SK-N-SH (cell line): ENCODE measurements at regions of chr1 and their contacts with region 1.

Region 1: DNA sequence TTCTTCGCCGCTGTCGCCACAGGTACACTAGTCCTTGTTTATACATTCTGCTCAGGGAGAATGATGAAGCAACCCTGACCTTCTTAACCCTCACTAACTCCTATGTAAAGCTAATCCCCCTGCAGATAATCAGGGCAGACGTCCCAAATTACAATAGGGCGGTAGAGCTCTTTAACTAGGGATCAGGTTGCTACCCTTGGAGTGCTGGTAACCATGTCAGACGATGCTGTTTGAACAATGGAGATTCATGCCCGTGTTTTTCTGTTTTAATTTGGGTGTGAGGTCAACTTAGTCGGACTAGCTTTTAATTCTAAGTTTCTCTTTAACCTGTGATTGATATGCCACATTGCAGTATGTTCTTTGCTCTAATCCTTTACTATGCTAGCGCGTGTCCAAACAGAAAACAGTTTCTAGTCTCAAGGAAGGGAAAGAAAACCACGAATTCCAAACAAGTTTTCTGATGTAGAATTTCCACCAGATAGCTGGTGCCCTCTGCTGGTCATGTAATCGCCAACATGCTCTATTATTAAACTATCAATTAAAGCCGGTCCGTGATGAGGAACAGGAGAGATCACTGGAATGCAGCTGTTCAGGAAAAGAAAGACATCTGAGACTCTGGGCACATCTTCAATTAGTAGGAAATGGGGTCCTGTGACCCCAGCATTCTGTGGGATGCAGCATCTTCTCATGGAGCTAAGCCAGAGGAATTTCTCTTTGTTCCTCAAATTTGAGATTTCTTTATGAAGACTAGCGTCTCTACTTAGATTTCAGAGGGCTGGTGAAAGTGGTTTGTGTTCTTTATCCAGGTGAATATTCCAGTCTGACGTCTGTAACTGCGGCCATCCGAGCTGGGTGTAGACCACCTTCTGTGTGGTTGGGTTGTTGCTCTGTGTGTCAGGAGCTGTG is 18.3 kb upstream of the VAMP3 start:
- DNase-seq: peak; percentile 62
- H3K4me3 ChIP-seq: no peak overlapping the region; a peak in 3 of 4 replicates
- H3K27ac ChIP-seq: peak overlapping the region in 1 of 2 experiments; percentile 77; a peak in 2 of 4 replicates
- H3K4me1 ChIP-seq: peaks cover 0 to 17% of the 10 kb centered on the region in 2 experiments; a peak in 2 of 4 replicates
- H3K27me3 ChIP-seq: no peaks in the 10 kb centered on the region
- CTCF ChIP-seq: peak; percentile 75
- EP300 ChIP-seq: no peak
- RAD21 ChIP-seq: peak; percentile 91

Region 2: GRCh38 chr1:7447077-7447476 is 305.7 kb before region 1 on chr1:
- CTCF ChIA-PET with region 1: no interaction called
- POLR2A ChIA-PET with region 1: no interaction called
- DNase-seq: no peak
- H3K4me3 ChIP-seq: no peak overlapping the region
- H3K27ac ChIP-seq: no peak overlapping the region
- H3K4me1 ChIP-seq: peaks cover 0 to 22% of the 10 kb centered on the region in 2 experiments; a peak in 1 of 4 replicates
- H3K27me3 ChIP-seq: no peaks in the 10 kb centered on the region
- CTCF ChIP-seq: no peak
- EP300 ChIP-seq: no peak
- RAD21 ChIP-seq: no peak

Region 3: GRCh38 chr1:7633506-7634245 is 119.1 kb before region 1 on chr1:
- CTCF ChIA-PET with region 1: no interaction called
- POLR2A ChIA-PET with region 1: no interaction called
- DNase-seq: no peak
- H3K4me3 ChIP-seq: no peak overlapping the region
- H3K27ac ChIP-seq: peak overlapping the region in 1 of 2 experiments; percentile 100; a peak in 2 of 4 replicates
- H3K4me1 ChIP-seq: peaks cover 0 to 80% of the 10 kb centered on the region in 2 experiments; a peak in 2 of 4 replicates
- H3K27me3 ChIP-seq: no peaks in the 10 kb centered on the region; the same call in 1 of the 2 replicates
- CTCF ChIP-seq: no peak
- EP300 ChIP-seq: no peak
- RAD21 ChIP-seq: no peak

Region 4: GRCh38 chr1:7656557-7657215 is 96.1 kb before region 1 on chr1:
- CTCF ChIA-PET with region 1: interaction called, 13 read pairs
- POLR2A ChIA-PET with region 1: no interaction called
- DNase-seq: no peak
- H3K4me3 ChIP-seq: no peak overlapping the region
- H3K27ac ChIP-seq: no peak overlapping the region
- H3K4me1 ChIP-seq: peaks cover 0 to 7% of the 10 kb centered on the region in 2 experiments; a peak in 1 of 4 replicates
- H3K27me3 ChIP-seq: no peaks in the 10 kb centered on the region
- CTCF ChIP-seq: no peak
- EP300 ChIP-seq: no peak
- RAD21 ChIP-seq: no peak

Region 5: GRCh38 chr1:7704214-7705047 is 48.3 kb before region 1 on chr1:
- CTCF ChIA-PET with region 1: interaction called, 29 read pairs
- POLR2A ChIA-PET with region 1: interaction called, 3 read pairs
- DNase-seq: peak; percentile 100
- H3K4me3 ChIP-seq: peak overlapping the region in 1 of 2 experiments; percentile 64; a peak in 2 of 4 replicates
- H3K27ac ChIP-seq: peak overlapping the region in 1 of 2 experiments; percentile 74; a peak in 1 of 4 replicates
- H3K4me1 ChIP-seq: peaks cover 0 to 8% of the 10 kb centered on the region in 2 experiments; a peak in 1 of 4 replicates
- H3K27me3 ChIP-seq: peaks cover 6% of the 10 kb centered on the region; the same call in 1 of the 2 replicates
- CTCF ChIP-seq: no peak
- EP300 ChIP-seq: no peak
- RAD21 ChIP-seq: no peak

Region 6: DNA sequence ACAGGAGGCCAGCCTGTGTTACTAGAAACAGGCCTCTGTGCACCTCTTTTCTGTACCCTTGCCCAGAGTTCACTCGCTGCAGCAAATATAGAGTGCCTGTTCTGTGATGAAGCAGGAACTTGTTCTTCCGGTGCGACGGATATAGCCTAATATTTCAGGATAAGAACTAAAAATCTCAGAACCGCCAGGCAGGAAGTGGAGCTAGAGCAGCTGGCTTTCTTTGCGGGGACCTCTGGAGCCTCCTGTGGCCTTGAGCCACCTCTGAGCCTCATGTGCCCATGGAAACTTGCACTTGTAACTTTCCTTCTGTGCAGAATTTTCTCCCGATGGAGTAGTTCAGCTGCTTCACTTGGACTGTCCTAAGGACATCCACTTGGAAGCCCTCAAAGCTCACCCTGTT is 26.1 kb before region 1 on chr1:
- CTCF ChIA-PET with region 1: interaction called, 17 read pairs
- POLR2A ChIA-PET with region 1: no interaction called
- DNase-seq: no peak
- H3K4me3 ChIP-seq: no peak overlapping the region
- H3K27ac ChIP-seq: no peak overlapping the region; a peak in 1 of 4 replicates
- H3K4me1 ChIP-seq: peaks cover 0 to 20% of the 10 kb centered on the region in 2 experiments; a peak in 1 of 4 replicates
- H3K27me3 ChIP-seq: no peaks in the 10 kb centered on the region
- CTCF ChIP-seq: no peak
- EP300 ChIP-seq: no peak
- RAD21 ChIP-seq: no peak

Region 7: DNA sequence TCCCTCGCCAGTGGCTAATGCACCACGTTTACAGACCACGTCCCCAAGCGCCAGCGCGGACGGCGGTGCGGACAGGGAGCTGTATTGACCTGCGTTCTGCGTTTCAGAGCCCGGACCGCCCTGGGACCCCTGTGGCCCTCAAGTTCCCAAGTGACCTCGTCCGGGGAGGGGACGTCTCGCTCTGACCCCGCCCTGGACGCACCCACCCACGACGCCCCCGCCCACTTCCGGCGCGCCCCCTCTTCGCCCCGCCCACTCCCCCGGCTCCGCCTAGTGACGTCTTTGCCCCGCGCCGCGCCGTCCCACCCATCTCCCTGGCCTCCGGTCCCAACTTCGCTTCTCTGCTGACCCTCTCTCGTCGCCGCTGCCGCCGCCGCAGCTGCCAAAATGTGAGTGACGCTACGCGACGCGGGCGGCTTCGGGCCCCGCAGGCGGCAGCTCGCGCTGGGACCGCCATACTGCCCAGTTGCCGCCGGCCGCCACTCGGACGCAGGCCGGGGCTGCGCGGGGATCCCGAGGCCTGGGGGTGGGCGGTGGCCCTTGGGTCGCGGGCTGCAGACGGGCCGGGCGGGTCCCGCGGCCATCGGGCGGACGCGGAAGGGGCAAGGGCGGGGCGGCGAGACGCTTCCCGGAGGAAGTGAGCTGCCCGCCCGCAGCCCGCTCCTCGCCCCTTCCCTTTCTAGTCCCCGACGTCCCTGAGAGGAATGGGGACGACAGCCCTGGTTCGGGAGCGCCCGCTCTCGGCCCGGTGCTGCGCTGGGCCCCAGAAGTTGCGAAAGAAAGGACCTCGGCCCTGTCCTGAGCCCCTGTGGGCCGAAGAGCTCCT is 18.4 kb after region 1 on chr1 and contains the start of gene VAMP3:
- CTCF ChIA-PET with region 1: interaction called, 112 read pairs
- POLR2A ChIA-PET with region 1: no interaction called
- DNase-seq: peak; percentile 99
- H3K4me3 ChIP-seq: peak within 1 kb of the TSS; percentile 67 to 98
- H3K27ac ChIP-seq: peak within 1 kb of the TSS; percentile 71 to 78; a peak in 3 of 4 replicates
- H3K4me1 ChIP-seq: peaks cover 5 to 19% of the 10 kb centered on the region in 2 experiments; a peak in 3 of 4 replicates
- H3K27me3 ChIP-seq: no peaks in the 10 kb centered on the region
- CTCF ChIP-seq: no peak
- EP300 ChIP-seq: no peak
- RAD21 ChIP-seq: no peak
- polyA plus RNA-seq, gene VAMP3: 96.4 and 114 TPM in 2 replicates

Region 8: DNA sequence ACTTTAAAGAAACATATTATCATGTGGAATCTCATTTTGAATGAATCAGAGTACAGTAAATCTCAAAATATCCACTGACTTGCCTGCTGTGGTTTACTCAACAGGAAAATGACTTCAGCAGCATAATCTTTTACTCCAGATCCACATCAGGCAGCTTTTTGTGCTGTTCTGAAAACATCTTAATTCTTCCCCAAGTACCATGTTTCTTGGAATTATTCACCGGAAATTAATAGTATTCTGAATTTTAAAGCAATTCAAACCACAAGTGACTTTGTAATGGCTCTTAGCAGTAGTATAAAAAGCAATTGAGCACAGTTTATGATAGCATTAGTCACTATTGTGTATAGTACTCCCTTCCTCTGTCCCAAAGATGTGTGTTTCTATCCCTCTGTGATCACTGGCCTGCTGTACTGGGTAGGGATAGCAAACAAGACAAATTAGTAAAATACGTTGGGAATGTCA is 337.5 kb after region 1 on chr1:
- CTCF ChIA-PET with region 1: no interaction called
- POLR2A ChIA-PET with region 1: no interaction called
- DNase-seq: no peak
- H3K4me3 ChIP-seq: no peak overlapping the region
- H3K27ac ChIP-seq: peak overlapping the region; percentile 64 to 99; a peak in 3 of 4 replicates
- H3K4me1 ChIP-seq: peaks cover 0 to 22% of the 10 kb centered on the region in 2 experiments; a peak in 2 of 4 replicates
- H3K27me3 ChIP-seq: no peaks in the 10 kb centered on the region
- CTCF ChIP-seq: no peak
- EP300 ChIP-seq: peak in 1 of 2 experiments; percentile 95; a peak in 2 of 4 replicates
- RAD21 ChIP-seq: no peak